Activated CD4-positive, alpha-beta T cell treated with anti-CD3 and anti-CD28 coated beads for 36 hours (primary cell): ENCODE measurements at regions of chr11 and their contacts with region 1.

Region 1: DNA sequence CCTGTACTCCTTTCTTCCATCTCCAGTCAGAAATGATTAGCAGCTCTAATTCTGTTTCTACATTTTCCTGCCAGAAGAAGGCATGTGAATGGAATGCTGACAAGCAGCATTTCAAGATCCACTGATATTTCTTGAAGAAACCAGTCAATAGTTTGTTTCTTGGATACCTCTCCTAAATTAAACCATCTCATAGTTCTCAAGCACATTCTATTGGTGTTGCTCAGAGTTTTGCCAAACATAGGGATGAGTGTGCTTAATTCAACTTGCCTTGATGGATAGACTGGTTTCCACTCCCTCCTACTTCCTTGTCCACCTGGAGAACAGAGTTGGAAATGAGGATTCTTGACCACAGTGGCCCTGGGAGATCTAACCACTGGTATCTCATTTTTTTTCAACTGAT is 29.8 kb upstream of the DDX10 start:
- DNase-seq: no peak
- ATAC-seq: no peak
- H3K4me3 Mint-ChIP-seq: no peak overlapping the region
- H3K27ac Mint-ChIP-seq: no peak overlapping the region
- H3K4me1 Mint-ChIP-seq: no peaks in the 10 kb centered on the region
- H3K27me3 Mint-ChIP-seq: peaks cover 17% of the 10 kb centered on the region

Region 2: DNA sequence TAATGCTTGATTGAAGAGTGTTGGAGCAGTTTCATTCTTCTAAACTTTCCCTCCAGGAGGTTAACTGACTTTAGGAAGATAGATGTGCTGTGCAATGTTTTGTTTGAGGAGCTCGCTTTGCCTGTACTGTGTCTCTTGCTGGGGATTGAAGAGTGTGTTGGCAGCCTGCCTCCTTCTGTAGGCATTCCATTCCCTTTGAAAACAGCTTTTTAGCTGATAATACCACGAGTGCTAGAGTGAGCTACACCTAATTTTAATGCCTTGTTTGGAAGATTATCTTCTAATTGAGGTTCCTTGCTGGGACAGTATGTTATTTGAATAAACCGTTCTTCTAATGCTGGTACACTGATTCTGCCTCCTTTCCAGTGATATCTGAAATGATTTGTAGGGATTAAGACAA is 37.0 kb after region 1 on chr11:
- CTCF ChIA-PET with region 1: no interaction called
- POLR2A ChIA-PET with region 1: no interaction called
- intact Hi-C with region 1: loop called in 1 of 2 experiments (anchors 1 kb)
- DNase-seq: no peak
- ATAC-seq: no peak
- H3K4me3 Mint-ChIP-seq: no peak overlapping the region
- H3K27ac Mint-ChIP-seq: no peak overlapping the region
- H3K4me1 Mint-ChIP-seq: peaks cover 28% of the 10 kb centered on the region
- H3K27me3 Mint-ChIP-seq: no peaks in the 10 kb centered on the region

Region 3: DNA sequence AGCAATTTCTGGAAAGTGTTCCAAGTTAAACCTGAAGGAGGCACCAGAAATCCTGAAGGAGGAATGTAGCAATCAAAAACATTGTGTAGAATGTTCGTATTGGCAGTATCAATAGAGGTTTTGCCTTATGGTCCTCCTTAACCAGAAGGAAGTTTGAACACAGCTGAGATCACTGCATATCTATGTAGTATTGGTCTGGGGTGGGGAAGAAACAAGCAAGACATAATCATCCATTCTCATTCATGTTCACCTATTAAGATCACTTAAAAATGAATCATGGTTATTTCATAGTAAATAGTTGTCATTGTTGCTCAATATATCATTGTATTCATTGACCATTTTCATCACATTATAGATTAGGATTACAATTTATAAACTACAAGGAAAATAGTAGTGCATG is 190.3 kb after region 1 on chr11:
- CTCF ChIA-PET with region 1: no interaction called
- POLR2A ChIA-PET with region 1: no interaction called
- intact Hi-C with region 1: no loop called
- DNase-seq: no peak
- ATAC-seq: no peak
- H3K4me3 Mint-ChIP-seq: no peak overlapping the region
- H3K27ac Mint-ChIP-seq: no peak overlapping the region
- H3K4me1 Mint-ChIP-seq: peaks cover 11% of the 10 kb centered on the region
- H3K27me3 Mint-ChIP-seq: no peaks in the 10 kb centered on the region